ENCODE measurements at regions of chr2 and their contacts with region 1.

Region 1: DNA sequence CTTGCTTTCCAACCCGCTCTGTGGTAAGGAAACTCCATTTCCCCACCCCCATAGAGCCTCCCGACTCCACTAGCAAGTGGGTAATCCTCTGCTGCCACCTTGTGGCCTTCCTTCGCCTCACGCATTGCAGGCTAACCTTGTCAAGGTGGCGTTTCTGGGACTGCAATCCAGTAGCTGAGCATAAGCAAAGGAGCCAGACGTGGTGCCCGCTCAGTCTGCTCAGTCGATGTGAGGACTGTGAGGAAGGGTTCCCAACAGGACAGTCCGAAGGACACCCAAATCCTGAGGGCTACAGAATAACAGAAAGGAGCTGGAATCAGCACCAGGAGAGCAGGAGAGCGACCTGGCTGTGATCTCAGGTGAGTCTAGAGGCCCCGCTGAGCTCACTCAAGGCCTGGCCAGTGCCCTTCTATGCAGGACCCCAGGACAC is 144.2 kb downstream of the SUCLG1 start:
- DNase-seq: peak; percentile 69
- H3K4me3 ChIP-seq: no peak overlapping the region
- H3K27ac ChIP-seq: no peak overlapping the region
- H3K4me1 ChIP-seq: no peaks in the 10 kb centered on the region
- H3K27me3 ChIP-seq: no peaks in the 10 kb centered on the region
- CTCF ChIP-seq: peak; percentile 97 to 98

Region 2: DNA sequence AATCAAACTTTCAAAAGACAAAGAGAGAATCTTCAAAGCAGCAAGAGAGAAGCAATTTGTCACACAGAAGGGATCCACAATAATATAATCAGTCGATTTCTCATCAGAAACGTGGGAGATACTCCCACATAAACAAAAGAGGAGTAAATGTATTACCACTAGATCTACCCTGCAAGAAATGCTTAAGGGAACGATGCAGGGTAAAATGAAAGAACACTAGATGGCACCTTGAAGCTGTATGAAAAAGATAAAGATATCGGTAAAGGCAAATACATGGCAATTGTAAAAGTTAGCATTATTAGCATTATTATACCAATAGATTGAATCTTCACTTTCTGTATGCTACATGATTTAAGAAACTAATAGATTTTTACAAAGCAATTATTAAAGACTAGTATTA is 532.8 kb before region 1 on chr2:
- CTCF ChIA-PET with region 1: no interaction called
- dilution Hi-C with region 1: no loop called
- in situ Hi-C with region 1: no loop called
- intact Hi-C with region 1: loop called (anchors 2 kb)
- DNase-seq: no peak
- H3K4me3 ChIP-seq: no peak overlapping the region
- H3K27ac ChIP-seq: no peak overlapping the region
- H3K4me1 ChIP-seq: no peaks in the 10 kb centered on the region
- H3K27me3 ChIP-seq: no peaks in the 10 kb centered on the region
- CTCF ChIP-seq: peak; percentile 2 to 22

Region 3: DNA sequence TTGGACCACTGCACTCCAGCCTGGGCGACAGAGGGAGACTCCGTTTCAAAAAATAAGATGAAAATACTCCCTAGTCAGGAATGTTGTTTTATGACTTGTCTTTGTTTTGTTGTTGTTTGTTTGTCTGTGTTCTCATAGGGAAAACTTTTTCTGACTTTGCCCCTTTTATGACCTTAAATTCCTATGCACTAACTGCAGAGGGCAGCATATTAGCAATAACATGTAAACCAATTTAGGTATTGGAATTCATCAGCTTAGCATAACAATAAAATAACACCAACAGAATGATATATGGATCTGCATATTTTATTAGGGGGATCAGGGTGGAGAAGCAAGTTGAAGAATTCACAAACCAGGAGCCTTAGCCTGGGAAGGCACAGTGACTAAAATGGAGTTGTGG is 487.3 kb before region 1 on chr2:
- CTCF ChIA-PET with region 1: no interaction called
- dilution Hi-C with region 1: no loop called
- in situ Hi-C with region 1: loop called in 1 of 2 experiments (anchors 25 kb)
- intact Hi-C with region 1: no loop called
- DNase-seq: no peak
- H3K4me3 ChIP-seq: no peak overlapping the region
- H3K27ac ChIP-seq: no peak overlapping the region
- H3K4me1 ChIP-seq: no peaks in the 10 kb centered on the region
- H3K27me3 ChIP-seq: no peaks in the 10 kb centered on the region
- CTCF ChIP-seq: peak; percentile 42 to 62

Region 4: DNA sequence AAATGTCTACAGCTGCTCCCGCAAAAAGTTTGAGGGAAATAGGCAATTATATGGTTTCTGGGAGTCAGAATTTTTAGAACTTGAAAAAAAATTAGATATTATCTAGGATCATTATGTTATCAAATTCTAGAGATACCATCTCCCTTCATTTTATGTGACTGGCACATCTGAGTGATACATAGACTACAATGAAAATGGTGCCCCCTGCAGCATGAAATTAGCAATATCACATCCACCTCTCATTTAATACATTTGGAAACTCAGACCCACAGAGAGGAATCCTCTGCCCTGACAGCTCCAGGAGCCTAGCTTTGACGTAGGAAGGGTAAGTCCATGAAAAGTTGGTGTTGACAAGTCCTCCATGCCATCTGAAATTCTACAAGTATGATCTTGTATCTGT is 237.4 kb before region 1 on chr2:
- CTCF ChIA-PET with region 1: no interaction called
- dilution Hi-C with region 1: no loop called
- in situ Hi-C with region 1: no loop called
- intact Hi-C with region 1: loop called (anchors 5 kb)
- DNase-seq: peak; percentile 39
- H3K4me3 ChIP-seq: no peak overlapping the region
- H3K27ac ChIP-seq: no peak overlapping the region
- H3K4me1 ChIP-seq: no peaks in the 10 kb centered on the region
- H3K27me3 ChIP-seq: no peaks in the 10 kb centered on the region
- CTCF ChIP-seq: peak; percentile 47 to 65

Region 5: GRCh38 chr2:84257831-84258230 is 57.1 kb before region 1 on chr2:
- CTCF ChIA-PET with region 1: no interaction called
- dilution Hi-C with region 1: no loop called
- in situ Hi-C with region 1: no loop called
- intact Hi-C with region 1: no loop called
- DNase-seq: peak; percentile 28
- H3K4me3 ChIP-seq: no peak overlapping the region
- H3K27ac ChIP-seq: no peak overlapping the region
- H3K4me1 ChIP-seq: no peaks in the 10 kb centered on the region
- H3K27me3 ChIP-seq: peaks cover under 1% of the 10 kb centered on the region
- CTCF ChIP-seq: peak; percentile 31 to 58

Region 6: GRCh38 chr2:84424152-84424551 is 109.2 kb after region 1 on chr2:
- CTCF ChIA-PET with region 1: no interaction called
- dilution Hi-C with region 1: no loop called
- in situ Hi-C with region 1: loop called in 1 of 2 experiments (anchors 10 kb)
- intact Hi-C with region 1: loop called (anchors 1 kb)
- DNase-seq: no peak
- H3K4me3 ChIP-seq: no peak overlapping the region
- H3K27ac ChIP-seq: no peak overlapping the region
- H3K4me1 ChIP-seq: peaks cover 8% of the 10 kb centered on the region
- H3K27me3 ChIP-seq: no peaks in the 10 kb centered on the region
- CTCF ChIP-seq: peak; percentile 50 to 55

Region 7: GRCh38 chr2:84631047-84631446 is 316.1 kb after region 1 on chr2:
- CTCF ChIA-PET with region 1: no interaction called
- dilution Hi-C with region 1: no loop called
- in situ Hi-C with region 1: no loop called
- intact Hi-C with region 1: loop called (anchors 2 kb)
- DNase-seq: peak; percentile 24
- H3K4me3 ChIP-seq: no peak overlapping the region
- H3K27ac ChIP-seq: no peak overlapping the region
- H3K4me1 ChIP-seq: no peaks in the 10 kb centered on the region
- H3K27me3 ChIP-seq: no peaks in the 10 kb centered on the region
- CTCF ChIP-seq: peak; percentile 65 to 69

Region 8: DNA sequence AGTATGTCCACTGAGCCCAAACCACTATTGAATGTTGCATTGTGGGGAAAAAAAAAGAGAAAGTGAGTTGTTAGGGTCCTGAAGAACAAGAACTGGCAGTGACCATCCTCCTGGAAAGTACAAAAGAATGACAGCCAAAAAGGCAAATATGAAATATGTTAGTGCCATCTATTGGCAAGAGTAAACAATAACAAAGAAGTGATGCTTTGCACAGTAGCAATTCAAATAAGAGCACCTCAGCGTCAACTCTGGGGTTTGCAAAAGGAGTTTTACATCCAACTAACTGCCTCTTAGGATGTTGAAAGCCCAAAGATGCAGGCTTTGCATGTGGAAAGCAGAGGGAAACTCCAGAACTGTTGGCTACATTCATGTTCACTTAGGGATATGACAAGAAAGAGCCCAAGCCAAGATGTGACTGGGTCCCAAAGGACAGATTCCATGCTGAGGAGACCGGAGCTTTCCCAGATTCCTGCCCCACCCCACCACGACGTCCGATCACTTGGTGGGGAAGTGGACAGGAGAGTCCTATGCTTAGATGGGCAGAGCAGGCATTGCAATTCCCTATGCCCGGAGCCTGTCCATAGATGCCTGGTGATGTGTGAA is 550.4 kb after region 1 on chr2:
- CTCF ChIA-PET with region 1: no interaction called
- dilution Hi-C with region 1: no loop called
- in situ Hi-C with region 1: no loop called
- intact Hi-C with region 1: loop called (anchors 10 kb)
- DNase-seq: peak; percentile 34
- H3K4me3 ChIP-seq: no peak overlapping the region
- H3K27ac ChIP-seq: no peak overlapping the region
- H3K4me1 ChIP-seq: no peaks in the 10 kb centered on the region
- H3K27me3 ChIP-seq: no peaks in the 10 kb centered on the region
- CTCF ChIP-seq: peak; percentile 40 to 41

Measured in mammary epithelial cell (primary cell).